Activated T-helper 1 cell treated with anti-CD3 and anti-CD28 coated beads, Interleukin-12 subunit alpha, Interleukin-12 subunit beta, Interleukin-2, Interleukin-4 antibody, amounts not matched to agents 30 ng/mL and 10 ng/mL and 1 ng/mL, durations not matched to agents 14 hours and 24 hours and 36 hours (primary cell): ENCODE measurements at regions of chr18 and their contacts with region 1.

Region 1: GRCh38 chr18:59308248-59308937 is 10.1 kb downstream of the CPLX4 start:
- DNase-seq: peak; percentile 61
- H3K4me3 Mint-ChIP-seq: peak overlapping the region; percentile 63
- H3K27ac Mint-ChIP-seq: no peak overlapping the region
- H3K4me1 Mint-ChIP-seq: no peaks in the 10 kb centered on the region
- H3K27me3 Mint-ChIP-seq: peaks cover 44% of the 10 kb centered on the region

Region 2: DNA sequence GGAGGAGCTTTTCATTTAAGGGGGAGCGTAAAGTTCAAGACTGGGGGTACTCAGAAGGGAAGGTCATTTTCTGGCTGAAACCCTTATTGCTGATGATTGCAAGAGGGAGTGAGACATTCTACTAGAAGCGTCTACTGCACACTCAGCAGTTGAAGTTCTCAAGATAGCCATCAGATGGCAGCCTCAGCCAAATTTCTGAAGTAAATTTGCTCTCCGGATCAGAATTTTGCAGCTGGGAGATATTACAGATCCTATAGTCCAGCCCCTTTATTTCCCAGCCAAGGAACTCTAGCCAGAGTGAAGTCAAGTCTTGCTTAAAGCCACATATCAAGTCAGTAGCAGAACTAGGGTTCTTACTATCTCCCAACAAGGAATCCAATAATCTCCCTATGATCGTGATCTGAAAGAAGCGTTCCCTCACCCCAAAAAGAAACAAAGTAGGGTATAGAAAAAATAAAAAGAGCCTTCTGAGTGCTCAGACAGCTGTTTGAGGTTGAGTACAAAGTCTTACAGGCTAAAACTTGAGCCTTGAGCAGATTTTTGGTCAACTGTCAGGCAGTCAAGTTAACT is 59.1 kb before region 1 on chr18:
- intact Hi-C with region 1: loop called (anchors 1 kb)
- DNase-seq: no peak
- H3K4me3 Mint-ChIP-seq: no peak overlapping the region
- H3K27ac Mint-ChIP-seq: no peak overlapping the region
- H3K4me1 Mint-ChIP-seq: no peaks in the 10 kb centered on the region
- H3K27me3 Mint-ChIP-seq: peaks cover 50% of the 10 kb centered on the region

Region 3: DNA sequence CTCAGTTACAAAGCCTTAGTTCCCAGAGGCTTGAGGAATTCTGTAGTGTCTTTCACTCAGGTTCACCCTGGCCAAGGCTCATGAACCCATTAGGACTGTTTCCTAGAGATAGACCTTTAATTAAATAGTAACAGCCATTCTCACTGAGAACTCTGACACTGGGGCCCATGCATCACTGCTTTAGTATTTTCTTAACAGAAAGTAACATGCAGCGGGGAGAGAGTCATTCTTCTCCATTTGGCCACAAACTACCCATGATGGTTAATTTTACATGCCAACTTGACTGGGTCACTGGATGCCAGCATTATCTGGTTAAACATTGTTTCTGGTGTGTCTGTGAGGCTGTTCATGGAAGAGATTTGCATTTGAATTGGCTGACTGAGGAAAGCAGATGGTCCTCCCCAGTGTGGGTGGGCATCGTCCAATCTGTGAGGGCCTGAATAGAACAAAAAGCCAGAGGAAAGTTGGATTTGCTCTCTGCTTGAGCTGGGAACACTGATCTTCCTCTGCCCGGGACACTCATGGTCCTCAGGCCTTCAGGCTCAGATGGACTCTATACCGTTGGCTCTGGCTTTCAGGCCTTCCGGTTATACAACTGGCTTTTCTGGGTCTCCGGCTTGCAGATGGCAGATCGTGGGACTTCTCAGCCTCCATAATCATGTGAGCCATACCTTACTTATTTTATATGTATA is 15.7 kb after region 1 on chr18:
- intact Hi-C with region 1: no loop called
- DNase-seq: no peak
- H3K4me3 Mint-ChIP-seq: no peak overlapping the region
- H3K27ac Mint-ChIP-seq: no peak overlapping the region
- H3K4me1 Mint-ChIP-seq: no peaks in the 10 kb centered on the region
- H3K27me3 Mint-ChIP-seq: peaks cover 5% of the 10 kb centered on the region

Region 4: GRCh38 chr18:59402432-59403090 is 94.2 kb after region 1 on chr18:
- intact Hi-C with region 1: loop called (anchors 1 kb)
- DNase-seq: peak; percentile 59
- H3K4me3 Mint-ChIP-seq: no peak overlapping the region
- H3K27ac Mint-ChIP-seq: no peak overlapping the region
- H3K4me1 Mint-ChIP-seq: no peaks in the 10 kb centered on the region
- H3K27me3 Mint-ChIP-seq: peaks cover 5% of the 10 kb centered on the region